IMR-90 (cell line): ENCODE measurements at regions of chr19 and their contacts with region 1.

Region 1: DNA sequence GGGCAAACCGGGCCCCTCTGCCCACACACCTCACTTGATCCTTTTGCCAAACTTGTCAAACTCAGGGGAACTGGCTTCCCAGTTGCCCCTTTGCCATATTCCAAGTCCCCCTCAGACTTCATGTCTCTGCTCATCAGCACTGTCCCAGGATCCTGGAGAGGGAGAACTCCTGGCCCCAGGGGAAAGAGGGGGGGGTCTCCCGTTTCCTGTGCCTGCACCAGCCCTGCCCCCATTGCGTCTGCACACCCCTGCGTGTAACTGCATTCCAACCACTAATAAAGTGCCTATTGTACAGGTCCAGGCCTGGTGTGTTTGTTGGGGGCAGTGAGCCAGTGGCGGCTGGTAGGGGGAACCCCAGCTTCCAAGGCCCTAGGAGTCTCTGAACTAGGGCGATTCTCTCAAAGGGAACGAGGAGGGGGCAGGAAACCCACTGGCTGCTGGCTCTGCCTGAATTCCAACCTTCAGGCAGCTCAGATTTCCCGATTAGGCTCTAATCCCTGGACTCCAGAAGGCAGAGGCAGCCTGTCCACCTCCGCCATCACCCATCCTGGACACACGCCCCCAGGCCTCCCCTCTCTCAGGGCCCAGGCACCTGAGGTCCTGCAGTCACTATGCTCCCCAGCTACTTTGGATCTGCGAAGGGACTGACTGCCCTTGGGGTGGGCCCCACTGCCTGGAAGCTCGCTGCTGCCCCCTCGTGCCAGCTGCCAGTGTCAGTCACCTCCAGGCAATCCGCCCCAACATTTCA is 9.7 kb upstream of the ILF3 start:
- DNase-seq: peak; percentile 69
- ATAC-seq: peak; percentile 98
- H3K4me3 ChIP-seq: no peak overlapping the region
- H3K27ac ChIP-seq: no peak overlapping the region
- H3K4me1 ChIP-seq: peaks cover 3% of the 10 kb centered on the region; the same call in 1 of the 2 replicates
- H3K27me3 ChIP-seq: no peaks in the 10 kb centered on the region
- CTCF ChIP-seq: peak; percentile 96
- POLR2A ChIP-seq: peak; percentile 34; the same call in 1 of the 2 replicates
- RAD21 ChIP-seq: peak; percentile 93

Region 2: GRCh38 chr19:10486538-10486937 is 157.9 kb before region 1 on chr19:
- CTCF ChIA-PET with region 1: no interaction called
- POLR2A ChIA-PET with region 1: no interaction called
- dilution Hi-C with region 1: no loop called
- in situ Hi-C with region 1: loop called (anchors 10 kb)
- intact Hi-C with region 1: loop called (anchors 10 kb)
- DNase-seq: no peak
- ATAC-seq: no peak
- H3K4me3 ChIP-seq: no peak overlapping the region
- H3K27ac ChIP-seq: no peak overlapping the region
- H3K4me1 ChIP-seq: no peaks in the 10 kb centered on the region
- H3K27me3 ChIP-seq: no peaks in the 10 kb centered on the region
- CTCF ChIP-seq: no peak
- POLR2A ChIP-seq: no peak
- RAD21 ChIP-seq: no peak

Region 3: GRCh38 chr19:10502524-10503001 is 141.9 kb before region 1 on chr19:
- CTCF ChIA-PET with region 1: no interaction called
- POLR2A ChIA-PET with region 1: no interaction called
- dilution Hi-C with region 1: no loop called
- in situ Hi-C with region 1: loop called (anchors 10 kb)
- intact Hi-C with region 1: no loop called
- DNase-seq: peak; percentile 85
- ATAC-seq: peak; percentile 96
- H3K4me3 ChIP-seq: peak overlapping the region; percentile 77
- H3K27ac ChIP-seq: peak overlapping the region; percentile 97
- H3K4me1 ChIP-seq: peaks cover 3% of the 10 kb centered on the region; the same call in 1 of the 2 replicates
- H3K27me3 ChIP-seq: no peaks in the 10 kb centered on the region
- CTCF ChIP-seq: peak; percentile 23; the same call in 1 of the 2 replicates
- POLR2A ChIP-seq: peak; percentile 95
- RAD21 ChIP-seq: 0 out of 2 replicates have a peak, but pooled peaks have one; percentile 3

Region 4: DNA sequence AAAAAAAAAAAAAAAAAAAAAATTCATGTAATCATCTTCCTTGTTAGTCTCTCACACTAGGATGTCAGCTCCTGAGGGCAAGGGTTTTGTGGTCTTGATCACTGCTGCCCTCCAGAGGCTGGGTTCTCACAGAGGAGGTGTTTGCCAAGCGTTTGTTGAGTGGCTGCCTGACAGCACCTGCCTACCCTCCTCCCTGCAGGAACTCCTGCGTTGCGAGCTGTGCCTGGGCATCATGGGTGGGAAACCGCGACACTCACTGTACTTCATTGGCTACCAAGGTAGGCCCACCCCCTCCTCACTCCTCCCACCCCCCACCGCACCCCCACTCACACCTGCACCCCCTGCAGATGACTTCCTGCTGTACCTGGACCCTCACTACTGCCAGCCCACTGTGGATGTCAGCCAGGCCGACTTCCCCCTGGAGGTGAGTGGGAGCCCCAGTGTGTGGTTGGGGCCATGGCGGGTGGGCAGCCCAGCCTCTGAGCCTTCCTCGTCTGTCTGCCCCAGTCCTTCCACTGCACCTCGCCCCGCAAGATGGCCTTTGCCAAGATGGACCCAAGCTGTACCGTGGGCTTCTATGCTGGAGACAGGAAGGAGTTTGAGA is 92.6 kb before region 1 on chr19:
- CTCF ChIA-PET with region 1: no interaction called
- POLR2A ChIA-PET with region 1: interaction called, 15 read pairs
- dilution Hi-C with region 1: no loop called
- in situ Hi-C with region 1: no loop called
- intact Hi-C with region 1: no loop called
- DNase-seq: no peak
- ATAC-seq: 0 out of 2 replicates have a peak, but pooled peaks have one; percentile 22
- H3K4me3 ChIP-seq: no peak overlapping the region
- H3K27ac ChIP-seq: no peak overlapping the region
- H3K4me1 ChIP-seq: no peaks in the 10 kb centered on the region
- H3K27me3 ChIP-seq: no peaks in the 10 kb centered on the region
- CTCF ChIP-seq: peak; percentile 25; the same call in 1 of the 2 replicates
- POLR2A ChIP-seq: no peak
- RAD21 ChIP-seq: peak; percentile 29; the same call in 1 of the 2 replicates

Region 5: DNA sequence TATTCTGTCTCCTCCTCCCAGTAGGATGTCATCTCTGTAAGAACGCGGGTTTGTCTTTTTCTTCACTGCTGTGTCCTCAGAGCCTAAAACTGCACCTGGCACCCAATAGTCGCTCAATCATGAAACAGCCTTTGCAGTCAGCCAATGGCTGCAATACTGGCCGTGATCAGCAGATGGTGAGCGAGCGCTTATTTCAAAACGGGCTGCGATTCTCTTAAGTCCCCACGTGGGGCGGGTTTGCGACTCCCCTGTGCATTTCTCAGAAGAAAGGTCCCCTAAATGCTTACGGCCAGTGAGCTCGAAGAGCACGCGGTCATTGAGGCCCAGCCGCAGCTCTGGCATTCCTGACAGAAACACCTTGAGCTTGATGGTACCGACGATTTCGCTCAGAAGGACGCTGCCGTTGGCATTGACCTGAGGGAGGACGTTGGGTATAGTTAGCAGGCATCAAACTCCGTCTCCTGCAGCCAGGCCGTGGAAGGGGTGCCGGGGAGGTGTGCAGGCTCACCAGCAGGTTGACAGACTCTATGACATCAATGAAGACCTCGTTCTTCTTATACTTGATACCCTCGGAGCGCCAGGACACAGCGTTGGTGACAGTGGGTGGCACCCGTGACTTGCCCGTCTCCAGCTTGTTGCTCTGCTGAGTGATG is 63.3 kb before region 1 on chr19:
- CTCF ChIA-PET with region 1: interaction called, 38 read pairs
- POLR2A ChIA-PET with region 1: no interaction called
- dilution Hi-C with region 1: no loop called
- in situ Hi-C with region 1: loop called (anchors 5 kb)
- intact Hi-C with region 1: loop called (anchors 1 kb)
- DNase-seq: peak; percentile 90
- ATAC-seq: peak; percentile 99
- H3K4me3 ChIP-seq: no peak overlapping the region
- H3K27ac ChIP-seq: no peak overlapping the region
- H3K4me1 ChIP-seq: peaks cover 1% of the 10 kb centered on the region; the same call in 1 of the 2 replicates
- H3K27me3 ChIP-seq: peaks cover 1% of the 10 kb centered on the region
- CTCF ChIP-seq: peak; percentile 99
- POLR2A ChIP-seq: peak; percentile 48; the same call in 1 of the 2 replicates
- RAD21 ChIP-seq: peak; percentile 99

Region 6: DNA sequence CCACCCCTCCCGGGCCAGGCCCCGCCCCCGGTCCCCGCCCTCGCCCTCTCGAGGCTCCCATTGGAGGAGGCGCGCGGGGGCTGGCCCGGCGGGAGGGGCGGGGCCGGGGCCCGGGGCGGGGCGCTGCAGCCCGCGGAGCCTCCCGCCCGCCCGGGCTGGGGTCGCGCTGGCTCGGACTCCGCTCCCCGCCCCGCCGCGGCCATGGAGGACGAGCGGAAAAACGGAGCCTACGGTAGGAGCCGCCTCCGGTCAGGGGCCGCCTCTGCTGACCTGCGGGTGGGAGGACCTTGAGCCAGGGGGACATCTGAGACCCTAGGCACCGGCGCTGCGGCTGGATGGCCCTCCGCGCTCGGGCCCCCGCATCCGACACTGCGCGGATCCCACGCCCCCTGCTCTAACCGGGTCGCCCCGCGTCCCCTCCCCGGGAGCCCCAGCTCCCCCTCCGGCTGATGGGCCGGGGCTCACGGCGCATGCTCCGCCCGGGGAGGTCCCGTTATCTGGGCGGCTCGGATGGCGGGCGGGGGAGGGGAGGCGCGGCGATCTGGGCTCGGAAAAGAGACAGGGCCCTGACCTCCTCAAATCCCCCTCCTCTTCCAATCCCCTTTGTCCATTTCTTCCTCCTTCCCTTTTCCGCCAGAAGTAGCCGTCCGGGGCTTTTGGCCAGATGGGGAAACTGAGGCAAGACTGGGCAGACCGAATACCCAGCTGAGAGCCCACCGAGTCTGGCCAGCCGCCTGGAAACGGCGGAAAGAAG is 41.9 kb before region 1 on chr19:
- CTCF ChIA-PET with region 1: no interaction called
- POLR2A ChIA-PET with region 1: no interaction called
- dilution Hi-C with region 1: no loop called
- in situ Hi-C with region 1: no loop called
- intact Hi-C with region 1: no loop called
- DNase-seq: peak; percentile 48
- ATAC-seq: peak; percentile 100
- H3K4me3 ChIP-seq: peak overlapping the region; percentile 90
- H3K27ac ChIP-seq: peak overlapping the region; percentile 82
- H3K4me1 ChIP-seq: peaks cover 10% of the 10 kb centered on the region
- H3K27me3 ChIP-seq: peaks cover 6% of the 10 kb centered on the region; the same call in 1 of the 2 replicates
- CTCF ChIP-seq: no peak
- POLR2A ChIP-seq: no peak; the same call in 1 of the 2 replicates
- RAD21 ChIP-seq: no peak

Region 7: GRCh38 chr19:10690341-10690781 is 45.9 kb after region 1 on chr19:
- CTCF ChIA-PET with region 1: no interaction called
- POLR2A ChIA-PET with region 1: no interaction called
- dilution Hi-C with region 1: no loop called
- in situ Hi-C with region 1: no loop called
- intact Hi-C with region 1: no loop called
- DNase-seq: peak; percentile 37
- ATAC-seq: no peak
- H3K4me3 ChIP-seq: no peak overlapping the region
- H3K27ac ChIP-seq: no peak overlapping the region
- H3K4me1 ChIP-seq: no peaks in the 10 kb centered on the region
- H3K27me3 ChIP-seq: no peaks in the 10 kb centered on the region
- CTCF ChIP-seq: no peak
- POLR2A ChIP-seq: no peak
- RAD21 ChIP-seq: no peak